ENCODE measurements at regions of chr20 and their contacts with region 1.

Region 1: DNA sequence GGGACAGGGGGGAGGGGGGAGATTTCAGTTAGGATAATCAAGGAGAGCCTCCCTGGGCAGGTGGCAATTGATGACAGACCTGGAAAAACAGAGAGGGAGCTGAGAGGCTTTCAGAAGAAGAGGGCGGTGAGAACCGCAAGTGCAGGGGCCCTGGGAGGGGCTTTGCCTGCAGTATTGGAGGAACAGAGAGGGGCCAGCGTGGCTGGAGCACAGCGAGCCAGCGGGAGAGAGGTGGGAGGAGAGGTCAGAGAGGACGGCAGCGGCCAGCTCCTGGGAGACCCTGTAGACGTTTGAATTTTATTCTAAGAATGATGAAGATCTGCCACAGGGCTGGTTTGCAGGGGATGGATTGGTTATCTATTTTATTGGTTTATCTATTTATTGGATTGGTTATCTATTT is 34.5 kb upstream of the NOL4L start:
- DNase-seq: no peak
- H3K4me3 ChIP-seq: no peak overlapping the region
- H3K27ac ChIP-seq: no peak overlapping the region
- H3K4me1 ChIP-seq: no peaks in the 10 kb centered on the region
- H3K27me3 ChIP-seq: peaks cover 6% of the 10 kb centered on the region
- CTCF ChIP-seq: no peak

Region 2: GRCh38 chr20:32521780-32522525 is 97.6 kb before region 1 on chr20:
- CTCF ChIA-PET with region 1: no interaction called
- POLR2A ChIA-PET with region 1: no interaction called
- intact Hi-C with region 1: no loop called
- DNase-seq: peak; percentile 73
- H3K4me3 ChIP-seq: no peak overlapping the region
- H3K27ac ChIP-seq: no peak overlapping the region
- H3K4me1 ChIP-seq: no peaks in the 10 kb centered on the region
- H3K27me3 ChIP-seq: no peaks in the 10 kb centered on the region
- CTCF ChIP-seq: peak; percentile 89

Region 3: DNA sequence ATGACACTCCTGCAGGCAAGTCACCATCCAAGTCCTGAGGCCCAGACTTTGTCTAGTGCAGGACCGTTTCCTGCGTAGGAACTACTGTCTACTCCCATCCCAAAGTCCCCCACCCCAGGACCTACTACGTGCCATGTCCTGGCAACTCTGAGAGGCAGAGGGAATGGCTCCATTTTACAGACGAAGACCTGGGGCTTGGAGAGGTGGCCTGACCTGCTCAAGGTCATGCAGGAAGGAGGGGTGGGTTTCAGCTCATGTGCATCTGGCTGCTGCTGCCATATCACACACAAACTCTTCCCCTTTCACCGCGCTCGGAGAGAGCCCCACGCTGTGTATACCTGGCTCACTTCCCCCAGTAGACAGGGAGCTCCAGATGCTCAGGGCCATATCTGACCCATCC is 33.3 kb before region 1 on chr20:
- CTCF ChIA-PET with region 1: no interaction called
- POLR2A ChIA-PET with region 1: interaction called, 15 read pairs
- intact Hi-C with region 1: no loop called
- DNase-seq: no peak
- H3K4me3 ChIP-seq: no peak overlapping the region
- H3K27ac ChIP-seq: no peak overlapping the region
- H3K4me1 ChIP-seq: no peaks in the 10 kb centered on the region
- H3K27me3 ChIP-seq: peaks cover 45% of the 10 kb centered on the region
- CTCF ChIP-seq: no peak

Measured in A673 (cell line).